GM10248 (cell line): ENCODE measurements at regions of chr17 and their contacts with region 1.

Region 1: DNA sequence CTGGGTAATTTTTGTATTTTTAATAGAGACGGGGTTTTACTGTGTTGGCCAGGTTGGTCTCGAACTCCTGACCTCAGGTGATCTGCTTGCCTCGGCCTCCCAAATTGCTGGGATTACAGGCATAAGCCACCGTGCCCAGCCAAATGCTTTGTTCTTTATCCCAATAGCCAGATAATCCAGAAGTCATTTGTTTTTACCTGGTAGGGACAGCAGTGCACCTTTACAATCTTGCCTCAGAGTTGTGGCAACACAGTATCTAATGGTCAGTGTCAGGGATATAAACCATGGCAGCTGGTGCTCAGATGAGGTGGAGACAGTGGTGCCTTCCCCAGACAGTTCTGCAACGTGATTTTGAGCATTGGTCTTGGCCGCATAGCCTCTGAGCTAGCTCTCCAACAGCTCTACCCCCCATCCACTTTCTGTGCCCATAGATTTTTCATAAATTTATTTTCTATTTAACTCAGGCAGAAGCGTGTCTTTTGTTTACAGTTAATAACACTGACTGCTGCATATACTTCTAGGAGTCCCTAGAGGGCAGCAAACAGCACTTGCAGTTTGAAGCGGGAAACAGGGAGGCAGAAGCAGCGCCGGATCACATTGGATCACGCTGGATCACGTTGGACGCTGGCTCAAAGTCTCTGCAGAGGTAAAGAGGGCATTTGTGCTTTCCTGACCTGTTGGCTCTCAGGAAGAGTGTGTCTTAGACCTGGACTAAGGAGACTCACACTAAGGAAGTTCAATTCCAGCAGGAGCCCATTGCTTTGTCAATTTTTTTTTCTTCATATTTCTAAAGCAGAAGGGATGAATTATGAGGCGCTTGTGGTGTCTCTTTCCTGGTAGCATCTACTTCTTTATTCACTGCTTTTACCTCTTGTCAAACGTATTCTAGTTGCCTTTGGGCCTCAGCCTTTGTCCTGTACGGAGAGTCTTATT is 5.1 kb upstream of the GGT6 start:
- DNase-seq: peak; percentile 69
- CTCF ChIP-seq: peak; percentile 91

Region 2: DNA sequence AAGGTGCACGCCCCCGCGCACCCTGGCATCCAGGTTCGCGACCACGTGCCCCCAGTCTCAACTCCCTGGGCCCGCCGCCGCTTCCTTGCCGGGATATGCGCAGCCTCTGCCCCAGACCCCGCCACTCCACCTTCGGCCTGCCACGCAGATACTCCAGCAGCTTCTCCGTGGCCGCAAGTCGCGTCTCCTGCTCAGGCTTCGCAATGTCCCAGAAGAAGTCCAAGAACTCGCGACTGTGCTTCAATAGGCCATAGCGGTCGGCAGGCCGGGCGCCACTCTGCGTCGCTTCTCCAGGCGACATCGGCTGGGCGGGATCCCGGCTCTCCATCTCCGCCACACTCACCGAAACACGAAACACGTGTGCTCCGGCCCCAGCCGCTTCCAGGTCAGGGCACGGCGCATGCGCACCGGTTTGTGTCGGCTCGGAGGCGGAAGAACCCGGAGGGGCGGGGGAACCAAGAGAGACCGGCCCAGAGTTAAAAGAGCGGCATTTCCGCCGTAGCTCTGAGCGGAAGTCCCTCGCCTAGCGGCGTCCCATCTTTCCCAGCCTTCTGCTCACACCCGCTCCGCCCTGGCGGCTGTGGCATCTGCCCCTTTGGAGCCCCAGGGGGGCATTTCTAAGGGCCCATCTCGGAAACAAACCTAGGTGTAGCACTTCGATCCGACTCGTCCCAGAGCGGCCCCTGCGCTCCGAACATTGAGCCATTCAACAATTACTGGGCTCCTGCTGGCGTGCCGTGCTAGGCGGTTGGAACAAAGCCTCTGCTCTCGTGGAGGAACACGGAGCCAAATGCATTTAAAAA is 10.3 kb before region 1 on chr17 and contains the start of gene MYBBP1A:
- CTCF ChIA-PET with region 1: interaction called, 61 read pairs
- POLR2A ChIA-PET with region 1: no interaction called
- DNase-seq: peak; percentile 100
- CTCF ChIP-seq: no peak

Region 3: GRCh38 chr17:4587803-4588202 is 22.3 kb after region 1 on chr17:
- CTCF ChIA-PET with region 1: interaction called, 18 read pairs
- POLR2A ChIA-PET with region 1: no interaction called
- DNase-seq: no peak
- CTCF ChIP-seq: no peak

Region 4: DNA sequence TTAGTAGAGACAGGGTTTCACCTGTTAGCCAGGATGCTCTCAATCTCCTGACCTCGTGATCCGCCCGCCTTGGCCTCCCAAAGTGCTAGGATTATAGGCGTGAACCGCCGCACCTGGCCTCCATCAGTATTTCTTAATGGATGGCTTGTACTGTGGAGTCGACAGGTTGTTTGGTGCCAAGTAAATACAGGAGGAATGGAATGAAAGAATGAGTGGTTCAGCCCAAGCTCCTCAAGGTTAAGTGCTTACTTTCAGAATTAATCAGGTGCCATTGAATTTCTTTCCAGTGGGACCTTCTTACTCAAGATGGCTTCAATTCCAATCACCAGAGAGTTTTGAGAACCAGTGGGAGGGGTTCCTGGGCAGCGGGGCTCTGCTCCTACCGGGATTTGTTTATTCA is 51.0 kb after region 1 on chr17:
- CTCF ChIA-PET with region 1: interaction called, 12 read pairs
- POLR2A ChIA-PET with region 1: no interaction called
- DNase-seq: no peak
- CTCF ChIP-seq: no peak

Region 5: DNA sequence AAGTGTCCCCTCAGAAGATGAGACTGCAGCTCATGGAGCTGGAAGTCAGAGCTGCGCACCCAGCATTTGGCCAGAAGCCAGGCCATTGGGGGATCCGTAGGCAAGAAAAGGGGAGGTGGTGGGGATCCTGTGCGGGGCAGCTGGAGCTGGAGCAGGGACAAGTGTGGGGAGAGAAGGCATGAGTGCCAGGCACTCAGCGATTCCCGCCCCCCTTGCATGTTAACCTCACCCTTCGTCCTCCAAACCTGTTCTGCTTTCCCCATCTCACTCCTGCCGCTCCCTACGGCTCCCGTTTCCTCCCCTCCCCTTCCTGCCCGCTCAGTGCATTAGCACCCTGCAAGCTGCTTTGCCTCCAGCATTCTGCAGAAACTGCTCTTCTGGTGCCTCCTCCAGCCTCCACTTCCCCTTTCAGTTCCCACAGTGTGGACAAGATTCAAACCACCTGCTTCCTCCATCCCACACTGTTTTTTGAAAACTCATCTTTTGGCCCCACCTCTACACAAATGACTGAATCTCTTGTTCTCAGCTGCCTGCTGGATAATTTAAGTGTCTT is 70.4 kb after region 1 on chr17:
- CTCF ChIA-PET with region 1: interaction called, 13 read pairs
- POLR2A ChIA-PET with region 1: no interaction called
- DNase-seq: peak; percentile 67
- CTCF ChIP-seq: no peak

Region 6: GRCh38 chr17:4691686-4692085 is 126.2 kb after region 1 on chr17:
- CTCF ChIA-PET with region 1: no interaction called
- POLR2A ChIA-PET with region 1: no interaction called
- DNase-seq: no peak
- CTCF ChIP-seq: no peak